Activated CD4-positive, alpha-beta memory T cell treated with anti-CD3 and anti-CD28 coated beads for 36 hours (primary cell): ENCODE measurements at regions of chr10 and their contacts with region 1.

Region 1: GRCh38 chr10:130136226-130137089 is at the start of gene GLRX3:
- DNase-seq: peak; percentile 90
- H3K4me3 Mint-ChIP-seq: peak within 1 kb of the TSS; percentile 88
- H3K27ac Mint-ChIP-seq: peak within 1 kb of the TSS; percentile 83
- H3K4me1 Mint-ChIP-seq: peaks cover 42% of the 10 kb centered on the region
- H3K27me3 Mint-ChIP-seq: peaks cover 2% of the 10 kb centered on the region
- total RNA-seq, gene GLRX3: 112 to 113 TPM

Region 2: GRCh38 chr10:129466703-129467358 is 669.6 kb before region 1 on chr10 and contains the start of gene MGMT:
- CTCF ChIA-PET with region 1: no interaction called
- POLR2A ChIA-PET with region 1: no interaction called
- intact Hi-C with region 1: loop called (anchors 1 kb)
- DNase-seq: peak; percentile 99
- H3K4me3 Mint-ChIP-seq: peak within 1 kb of the TSS; percentile 75
- H3K27ac Mint-ChIP-seq: peak within 1 kb of the TSS; percentile 56
- H3K4me1 Mint-ChIP-seq: peaks cover 11% of the 10 kb centered on the region
- H3K27me3 Mint-ChIP-seq: peaks cover 3% of the 10 kb centered on the region
- total RNA-seq, gene MGMT: 22.9 to 23.8 TPM